ENCODE measurements at regions of chr1 and their contacts with region 1.

Region 1: GRCh38 chr1:25796811-25797458 is 3.1 kb upstream of the SELENON start:
- DNase-seq: peak; percentile 96

Region 2: DNA sequence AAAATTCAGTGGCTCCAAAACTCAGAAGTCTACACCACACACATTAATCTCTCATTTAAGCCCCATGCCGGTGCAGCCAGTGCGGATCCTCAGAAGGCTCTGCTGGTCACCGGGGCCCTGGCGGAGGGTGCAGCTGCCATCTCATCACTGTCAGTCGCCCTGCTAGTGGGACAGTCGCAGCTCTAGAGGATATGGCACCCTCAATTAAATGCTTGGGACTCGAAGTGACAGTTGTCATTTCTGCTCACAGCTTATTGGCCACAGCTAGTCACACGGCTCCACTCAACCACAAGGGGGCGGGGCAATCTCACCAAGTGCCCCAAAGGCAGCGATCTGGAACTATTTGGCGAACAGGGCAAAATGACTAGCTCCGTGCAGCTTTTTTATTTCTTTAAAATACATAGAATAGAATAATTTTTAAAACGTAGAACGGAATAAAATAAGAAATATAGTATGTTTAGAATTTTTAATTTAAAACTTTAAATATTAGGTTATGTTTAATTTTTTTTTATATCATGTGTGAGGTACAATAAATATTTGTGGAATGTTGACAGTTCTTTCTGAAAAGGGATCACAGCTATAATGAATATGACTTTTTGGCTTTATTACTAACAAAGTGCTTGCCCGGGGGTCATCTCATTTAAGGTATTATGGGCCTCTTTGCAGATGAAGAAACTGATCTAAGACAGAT is 188.3 kb before region 1 on chr1:
- intact Hi-C with region 1: loop called (anchors 2 kb)
- DNase-seq: peak; percentile 94

Region 3: GRCh38 chr1:25616095-25616986 is 180.6 kb before region 1 on chr1 and contains the start of gene MAN1C1:
- intact Hi-C with region 1: loop called in 1 of 2 experiments (anchors 2 kb)
- DNase-seq: peak; percentile 94
- total RNA-seq, gene MAN1C1: 15.0 to 29.4 TPM

Region 4: GRCh38 chr1:25743826-25744581 is 52.9 kb before region 1 on chr1:
- intact Hi-C with region 1: loop called in 1 of 2 experiments (anchors 5 kb)
- DNase-seq: peak; percentile 86

Region 5: GRCh38 chr1:25815901-25816718 is 19.2 kb after region 1 on chr1:
- intact Hi-C with region 1: loop called in 1 of 2 experiments (anchors 1 kb)
- DNase-seq: no peak